Activated CD4-positive, alpha-beta T cell treated with anti-CD3 and anti-CD28 coated beads, Interleukin-2, amount 10 ng/mL, durations not matched to agents 24 days and 14 days (primary cell): ENCODE measurements at regions of chr11 and their contacts with region 1.

Region 1: DNA sequence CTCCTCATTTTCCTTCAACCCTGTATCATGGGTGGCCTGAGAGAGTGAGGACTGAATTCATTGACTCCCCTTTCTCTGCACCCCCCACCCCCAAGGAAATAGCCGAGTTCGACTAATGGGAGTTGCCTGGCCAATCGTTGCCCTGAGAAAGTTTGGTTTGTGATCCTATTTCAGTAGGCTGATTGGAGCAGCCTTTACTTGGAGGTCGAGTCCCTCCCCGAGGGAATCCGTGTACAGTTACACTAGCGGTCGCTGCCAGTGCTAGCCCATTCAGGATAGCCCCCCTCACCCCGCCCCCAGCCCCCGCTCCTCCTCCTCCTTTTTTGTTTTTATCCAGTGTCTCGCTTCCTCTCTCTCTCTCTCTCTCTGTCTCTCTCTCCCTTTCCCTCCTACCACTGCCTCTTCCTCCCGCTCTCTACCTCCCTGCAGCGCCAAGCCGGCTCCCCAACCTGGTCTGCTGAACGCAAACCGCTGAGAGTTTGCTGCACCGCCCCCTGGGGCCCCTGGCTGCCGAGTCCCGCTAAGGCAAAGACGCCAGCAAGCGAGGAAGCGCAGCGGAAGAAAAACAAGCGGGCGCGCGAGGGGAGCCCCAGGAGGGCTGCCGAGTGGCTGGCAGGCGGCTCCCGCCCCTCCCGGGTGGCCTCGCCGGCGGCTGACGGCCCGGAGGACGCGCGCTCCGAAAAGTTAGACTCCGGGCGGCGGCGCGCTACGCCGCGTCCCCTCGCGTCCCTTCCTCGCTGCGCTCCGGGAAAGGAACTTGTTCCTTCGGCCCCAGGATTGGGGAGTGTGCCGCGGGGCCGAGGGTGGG is at the start of gene GRAMD1B:
- DNase-seq: peak; percentile 96
- H3K4me3 Mint-ChIP-seq: peak within 1 kb of the TSS; percentile 87
- H3K27ac Mint-ChIP-seq: peak within 1 kb of the TSS; percentile 90
- H3K4me1 Mint-ChIP-seq: peaks cover 55% of the 10 kb centered on the region
- H3K27me3 Mint-ChIP-seq: no peaks in the 10 kb centered on the region
- total RNA-seq, gene GRAMD1B: 117 TPM in 2 replicates

Region 2: DNA sequence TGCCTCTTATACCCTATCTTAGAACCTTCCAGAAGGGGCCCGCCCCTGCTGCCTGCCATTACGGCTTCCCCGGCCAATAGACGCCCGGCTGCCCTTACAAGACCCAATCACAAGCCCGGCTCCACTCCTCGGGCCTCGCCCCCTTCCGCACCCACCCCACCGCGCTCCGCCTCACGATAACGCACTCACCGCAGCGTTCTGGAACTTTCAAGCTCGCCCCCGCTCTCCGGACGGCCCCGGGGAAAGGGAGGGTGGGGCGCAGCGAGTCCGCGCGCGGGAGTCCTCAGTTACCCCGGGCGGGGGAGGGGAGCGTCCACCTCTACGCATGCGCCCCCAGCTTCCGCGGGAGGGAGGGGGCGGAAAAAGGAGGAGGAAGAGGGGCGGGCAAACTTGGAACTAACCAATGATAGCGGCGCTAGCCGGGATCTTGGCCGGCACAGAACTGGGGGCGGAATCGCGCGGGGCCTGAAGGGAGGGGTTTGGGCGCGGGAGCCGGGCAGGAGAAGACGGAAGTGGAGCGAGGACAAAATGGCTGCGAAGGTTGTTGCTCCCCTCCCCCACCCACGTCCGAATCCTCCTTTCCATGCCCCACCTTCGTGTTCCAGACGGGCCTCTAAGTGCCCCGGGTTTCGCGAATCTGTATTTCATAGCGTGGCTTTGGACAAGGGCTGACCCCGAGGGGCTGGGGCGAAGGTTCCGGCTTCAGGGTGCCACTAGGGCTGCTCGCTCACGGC is 367.8 kb before region 1 on chr11:
- intact Hi-C with region 1: loop called (anchors 5 kb)
- DNase-seq: peak; percentile 100
- H3K4me3 Mint-ChIP-seq: peak overlapping the region; percentile 100
- H3K27ac Mint-ChIP-seq: peak overlapping the region; percentile 99
- H3K4me1 Mint-ChIP-seq: peaks cover 46% of the 10 kb centered on the region
- H3K27me3 Mint-ChIP-seq: peaks cover 1% of the 10 kb centered on the region

Region 3: DNA sequence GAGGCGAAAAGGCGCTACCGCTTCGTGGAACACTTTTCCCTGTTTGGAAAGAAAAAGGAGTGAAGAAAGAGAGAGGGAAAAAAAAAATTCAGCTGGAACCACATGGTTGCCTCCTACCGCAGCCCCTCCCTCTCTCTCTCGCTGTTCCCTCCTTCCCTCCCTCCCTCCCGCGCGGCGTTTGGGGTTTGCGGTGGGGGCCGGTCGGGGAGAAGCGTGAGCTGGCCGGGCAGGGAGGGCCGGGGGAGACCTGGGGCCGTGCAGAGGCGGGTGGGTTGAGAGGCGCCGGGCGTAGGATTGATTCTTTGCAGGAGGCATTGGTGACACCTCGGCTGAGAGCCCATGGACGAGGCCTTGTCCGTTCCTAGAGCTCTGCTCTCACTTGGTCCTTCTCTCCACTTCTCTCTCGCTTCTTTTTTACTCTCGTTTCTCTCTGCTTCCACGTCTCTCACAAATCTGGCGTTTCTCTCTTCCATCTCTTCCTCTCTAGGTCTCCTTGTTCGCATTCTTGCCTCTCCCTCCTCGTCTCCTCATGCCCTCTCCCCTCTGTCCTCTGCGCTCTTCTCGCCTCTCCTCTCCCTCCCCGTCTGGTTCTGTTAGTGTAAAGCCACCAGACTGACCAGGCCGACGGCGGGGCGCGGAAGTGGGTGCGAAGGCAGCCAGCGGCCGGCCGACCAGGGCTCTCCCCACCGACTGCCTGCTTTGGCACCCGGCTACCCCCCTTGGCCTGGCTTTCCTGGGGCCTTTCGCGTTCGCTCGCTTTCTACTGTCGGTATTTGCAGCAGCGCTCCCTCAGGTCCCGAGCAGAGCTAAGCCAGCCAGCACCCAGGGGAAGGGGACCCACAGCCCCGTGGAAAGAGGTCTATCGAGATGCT is 234.7 kb before region 1 on chr11 and contains the start of gene CLMP:
- intact Hi-C with region 1: no loop called
- DNase-seq: peak; percentile 59
- H3K4me3 Mint-ChIP-seq: peak within 1 kb of the TSS; percentile 56
- H3K27ac Mint-ChIP-seq: no peak within 1 kb of the TSS
- H3K4me1 Mint-ChIP-seq: peaks cover 12% of the 10 kb centered on the region
- H3K27me3 Mint-ChIP-seq: peaks cover 79% of the 10 kb centered on the region
- total RNA-seq, gene CLMP: 0.05 and 0.12 TPM in 2 replicates

Region 4: DNA sequence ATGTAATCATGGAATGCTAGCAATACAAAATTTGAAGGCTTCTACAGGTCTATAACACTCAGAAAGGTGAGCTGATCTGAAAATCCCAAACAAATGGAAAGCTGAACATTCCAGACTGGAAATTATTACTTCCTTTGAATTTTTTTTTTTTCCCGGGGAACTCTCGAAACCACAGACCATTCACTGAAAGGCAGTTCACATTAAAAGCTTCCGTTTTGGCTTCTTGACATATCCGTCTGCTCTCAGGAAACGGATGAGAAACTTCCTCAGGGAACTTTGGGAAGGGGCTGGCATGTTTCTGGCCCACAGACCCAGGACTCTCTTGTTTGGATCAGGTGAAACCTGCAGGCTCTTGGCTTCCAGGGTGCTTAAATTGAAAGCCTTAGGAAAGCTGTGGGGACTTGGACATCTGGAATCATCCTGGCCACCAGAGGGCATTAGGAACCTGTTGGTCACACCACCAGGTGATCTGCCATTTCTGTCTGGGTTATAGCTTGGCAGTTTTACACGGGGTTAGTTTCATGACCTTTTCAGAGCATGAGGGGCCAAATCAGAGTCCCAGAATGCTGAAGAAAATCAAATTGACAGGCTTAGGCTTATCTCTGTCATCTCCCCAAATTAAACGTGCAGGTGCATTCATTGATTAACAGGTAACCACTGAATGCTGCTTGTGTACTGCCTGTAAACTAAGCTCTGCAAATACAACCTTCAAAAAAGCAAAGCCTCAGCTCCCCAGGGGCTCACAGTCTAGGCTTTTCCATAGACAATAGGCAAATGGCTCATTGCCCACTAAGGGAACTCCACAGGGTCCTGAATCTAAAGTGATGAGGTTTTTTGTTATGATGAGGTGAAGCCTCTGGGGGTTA is 22.8 kb before region 1 on chr11:
- intact Hi-C with region 1: loop called (anchors 2 kb)
- DNase-seq: peak; percentile 88
- H3K4me3 Mint-ChIP-seq: peak overlapping the region; percentile 85
- H3K27ac Mint-ChIP-seq: peak overlapping the region; percentile 77
- H3K4me1 Mint-ChIP-seq: peaks cover 53% of the 10 kb centered on the region
- H3K27me3 Mint-ChIP-seq: no peaks in the 10 kb centered on the region

Region 5: DNA sequence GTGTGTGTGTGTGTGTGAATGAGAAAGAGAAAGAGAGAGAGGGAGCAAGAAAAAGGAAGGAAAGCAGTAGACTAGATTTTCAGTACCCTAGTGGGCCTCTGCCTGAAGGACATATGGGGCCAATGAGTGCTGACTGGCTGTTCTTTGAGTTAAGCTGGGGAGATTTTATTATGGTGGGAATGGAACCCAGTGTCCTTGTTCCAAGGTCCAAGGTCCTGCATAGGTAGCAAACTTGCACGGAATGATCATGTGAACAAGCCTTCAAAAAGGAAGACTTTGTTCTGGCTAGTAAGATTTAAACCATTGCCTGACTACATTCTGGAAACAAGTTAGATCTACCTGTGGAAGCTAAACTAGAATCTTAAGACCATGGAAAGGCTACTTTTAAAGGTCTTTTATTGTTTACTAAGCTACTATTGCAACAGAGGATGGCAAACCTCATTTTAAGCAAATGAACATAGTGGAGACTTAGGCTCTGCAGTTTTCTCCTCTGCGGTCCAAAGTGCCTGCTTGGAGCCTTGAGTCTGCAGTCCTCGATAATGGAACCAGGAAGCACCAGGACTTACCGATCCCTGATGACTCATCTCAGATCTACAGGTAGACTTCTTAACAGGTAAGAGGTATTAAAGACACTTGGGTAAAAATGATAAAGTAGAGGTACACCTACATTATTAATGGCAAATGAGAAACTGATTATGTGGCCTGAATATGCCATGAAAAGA is 10.2 kb before region 1 on chr11:
- intact Hi-C with region 1: no loop called
- DNase-seq: no peak
- H3K4me3 Mint-ChIP-seq: no peak overlapping the region
- H3K27ac Mint-ChIP-seq: no peak overlapping the region
- H3K4me1 Mint-ChIP-seq: peaks cover 23% of the 10 kb centered on the region
- H3K27me3 Mint-ChIP-seq: no peaks in the 10 kb centered on the region

Region 6: DNA sequence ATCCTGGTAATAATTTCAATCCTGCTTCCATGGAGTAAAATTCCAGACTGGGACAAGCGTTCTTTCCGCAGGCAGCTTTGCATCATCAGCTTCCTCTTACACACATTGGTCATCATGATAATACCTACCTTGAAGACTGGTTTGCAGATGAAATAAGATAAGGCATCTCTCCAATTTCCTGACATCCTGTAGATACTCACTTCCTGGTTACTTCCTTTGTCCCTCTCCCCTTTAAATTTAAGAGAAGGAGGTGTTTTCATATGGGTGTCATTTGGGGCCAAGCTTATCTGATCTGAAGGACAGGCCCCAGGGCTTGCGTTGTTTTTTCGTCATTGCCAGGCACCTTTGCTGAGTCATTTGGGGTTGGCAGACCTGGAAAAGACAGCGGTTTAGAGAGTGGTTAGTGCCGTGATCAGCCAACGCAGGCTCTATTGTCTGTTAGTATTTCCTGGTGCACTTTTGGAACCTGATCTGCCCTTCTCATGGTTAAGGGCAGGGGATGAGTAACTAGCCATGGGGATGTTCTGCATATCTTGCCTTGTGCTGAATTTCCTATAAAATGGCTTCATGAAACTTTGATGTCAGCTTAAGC is 24.0 kb after region 1 on chr11:
- intact Hi-C with region 1: loop called (anchors 1 kb)
- DNase-seq: peak; percentile 91
- H3K4me3 Mint-ChIP-seq: peak overlapping the region; percentile 82
- H3K27ac Mint-ChIP-seq: peak overlapping the region; percentile 94
- H3K4me1 Mint-ChIP-seq: peaks cover 79% of the 10 kb centered on the region
- H3K27me3 Mint-ChIP-seq: no peaks in the 10 kb centered on the region

Region 7: DNA sequence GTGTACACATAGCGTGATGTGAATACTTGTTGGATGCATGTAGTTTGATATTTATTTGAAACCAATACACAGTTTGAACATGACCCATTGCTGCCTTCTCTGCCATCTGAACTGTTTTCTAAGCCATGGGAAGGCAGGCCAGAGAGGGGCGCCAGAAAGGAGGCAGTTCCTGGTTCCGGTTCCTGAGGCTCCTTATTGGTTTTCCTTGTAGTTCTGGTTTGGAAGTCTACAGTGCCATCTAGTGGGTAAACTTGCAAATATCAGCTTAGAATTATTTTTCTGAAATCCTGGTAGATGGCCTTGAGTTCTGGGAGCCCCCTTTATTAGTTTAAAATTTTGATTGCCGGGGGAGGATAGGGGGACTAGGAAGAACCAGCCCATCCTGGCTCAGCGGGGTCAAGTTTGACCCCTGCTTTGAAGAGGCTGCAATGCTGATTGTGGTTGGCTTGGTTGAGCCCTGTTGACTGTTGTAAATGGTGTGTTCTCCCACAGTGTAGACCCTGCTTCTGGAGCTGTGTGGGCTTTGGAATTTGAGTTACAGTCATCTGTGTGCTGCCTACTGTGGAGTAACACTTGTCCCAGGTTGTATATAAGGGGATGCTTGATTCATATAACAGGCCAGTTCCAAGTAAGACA is 48.4 kb after region 1 on chr11:
- intact Hi-C with region 1: loop called (anchors 1 kb)
- DNase-seq: peak; percentile 81
- H3K4me3 Mint-ChIP-seq: peak overlapping the region; percentile 43
- H3K27ac Mint-ChIP-seq: peak overlapping the region; percentile 78
- H3K4me1 Mint-ChIP-seq: peaks cover 55% of the 10 kb centered on the region
- H3K27me3 Mint-ChIP-seq: no peaks in the 10 kb centered on the region